GM12878 (cell line): ENCODE measurements at regions of chr7 and their contacts with region 1.

Region 1: GRCh38 chr7:105759670-105760550 is 116.5 kb downstream of the ATXN7L1 start:
- DNase-seq: no peak
- ATAC-seq: peak; percentile 60
- H3K4me3 ChIP-seq: no peak overlapping the region
- H3K27ac ChIP-seq: no peak overlapping the region
- H3K4me1 ChIP-seq: no peaks in the 10 kb centered on the region
- H3K27me3 ChIP-seq: peaks cover 0 to 3% of the 10 kb centered on the region in 2 experiments; a peak in 2 of 4 replicates
- CTCF ChIP-seq: peak; percentile 33 to 79 (median 42); a peak in 5 of 6 replicates
- EP300 ChIP-seq: no peak
- POLR2A ChIP-seq: no peak
- RAD21 ChIP-seq: peak; percentile 75

Region 2: DNA sequence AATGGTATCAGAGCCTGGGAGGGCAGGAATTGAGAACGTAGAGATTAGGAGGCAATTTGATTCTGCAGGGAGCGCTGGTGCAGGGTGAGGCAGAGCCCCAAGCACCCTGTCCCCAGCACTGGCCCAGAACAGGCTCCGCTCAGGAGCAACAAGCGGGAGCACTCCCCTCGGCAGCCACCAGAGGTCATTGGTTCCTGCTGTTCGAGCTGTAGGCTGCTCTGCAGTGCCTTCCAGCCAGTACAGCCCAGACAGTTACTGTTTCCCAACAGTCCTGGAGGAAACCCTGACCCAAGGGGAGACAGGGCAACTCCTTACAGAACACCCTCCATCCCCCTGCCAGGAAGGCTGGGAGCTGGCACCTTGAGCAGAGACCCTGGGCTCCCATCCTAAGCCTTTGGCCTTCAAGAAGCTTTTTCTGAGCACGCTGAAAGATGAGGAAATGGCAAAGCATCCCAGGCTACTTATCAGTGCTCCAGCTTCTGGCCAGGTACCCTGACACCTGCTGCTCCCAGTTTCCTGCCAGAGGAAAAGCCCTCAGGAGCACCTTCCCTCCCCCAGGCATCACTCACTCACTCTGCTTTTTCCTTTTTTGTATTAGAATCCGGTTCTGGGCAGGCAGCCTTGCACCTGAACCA is 107.4 kb before region 1 on chr7:
- CTCF ChIA-PET with region 1: interaction called, 15 read pairs
- POLR2A ChIA-PET with region 1: no interaction called
- RAD21 ChIA-PET with region 1: interaction called, 7 read pairs
- SMC1A ChIA-PET with region 1: interaction called, 8 read pairs
- in situ Hi-C with region 1: no loop called
- intact Hi-C with region 1: no loop called
- DNase-seq: no peak
- ATAC-seq: peak; percentile 98
- H3K4me3 ChIP-seq: no peak overlapping the region
- H3K27ac ChIP-seq: no peak overlapping the region
- H3K4me1 ChIP-seq: no peaks in the 10 kb centered on the region
- H3K27me3 ChIP-seq: no peaks in the 10 kb centered on the region; a peak in 2 of 4 replicates
- CTCF ChIP-seq: peak; percentile 83 to 93 (median 87)
- EP300 ChIP-seq: no peak
- POLR2A ChIP-seq: no peak
- RAD21 ChIP-seq: peak; percentile 70

Region 3: DNA sequence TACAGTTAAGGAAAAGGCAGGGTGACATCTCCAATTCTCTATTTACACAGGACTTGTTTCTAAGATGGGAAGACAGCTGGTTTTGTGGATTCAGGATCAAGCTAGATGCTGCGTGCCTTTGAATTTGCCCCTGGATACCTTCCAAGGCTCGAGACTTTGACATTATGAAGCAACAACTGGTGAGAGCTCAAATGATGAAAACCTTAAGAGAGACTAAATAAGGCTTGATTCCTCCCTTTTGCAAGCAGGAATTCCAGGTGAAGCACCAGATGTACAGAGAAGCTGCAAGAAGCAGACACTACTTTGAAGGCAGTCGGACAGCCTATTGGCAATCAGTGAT is 35.5 kb after region 1 on chr7:
- CTCF ChIA-PET with region 1: interaction called, 7 read pairs
- POLR2A ChIA-PET with region 1: no interaction called
- RAD21 ChIA-PET with region 1: no interaction called
- SMC1A ChIA-PET with region 1: interaction called, 11 read pairs
- in situ Hi-C with region 1: no loop called
- intact Hi-C with region 1: no loop called
- DNase-seq: no peak
- ATAC-seq: no peak
- H3K4me3 ChIP-seq: no peak overlapping the region
- H3K27ac ChIP-seq: no peak overlapping the region
- H3K4me1 ChIP-seq: peaks cover 3% of the 10 kb centered on the region; the same call in 1 of the 2 replicates
- H3K27me3 ChIP-seq: peaks cover 3% of the 10 kb centered on the region in 2 experiments; a peak in 1 of 4 replicates
- CTCF ChIP-seq: no peak
- EP300 ChIP-seq: no peak
- POLR2A ChIP-seq: no peak
- RAD21 ChIP-seq: no peak

Region 4: DNA sequence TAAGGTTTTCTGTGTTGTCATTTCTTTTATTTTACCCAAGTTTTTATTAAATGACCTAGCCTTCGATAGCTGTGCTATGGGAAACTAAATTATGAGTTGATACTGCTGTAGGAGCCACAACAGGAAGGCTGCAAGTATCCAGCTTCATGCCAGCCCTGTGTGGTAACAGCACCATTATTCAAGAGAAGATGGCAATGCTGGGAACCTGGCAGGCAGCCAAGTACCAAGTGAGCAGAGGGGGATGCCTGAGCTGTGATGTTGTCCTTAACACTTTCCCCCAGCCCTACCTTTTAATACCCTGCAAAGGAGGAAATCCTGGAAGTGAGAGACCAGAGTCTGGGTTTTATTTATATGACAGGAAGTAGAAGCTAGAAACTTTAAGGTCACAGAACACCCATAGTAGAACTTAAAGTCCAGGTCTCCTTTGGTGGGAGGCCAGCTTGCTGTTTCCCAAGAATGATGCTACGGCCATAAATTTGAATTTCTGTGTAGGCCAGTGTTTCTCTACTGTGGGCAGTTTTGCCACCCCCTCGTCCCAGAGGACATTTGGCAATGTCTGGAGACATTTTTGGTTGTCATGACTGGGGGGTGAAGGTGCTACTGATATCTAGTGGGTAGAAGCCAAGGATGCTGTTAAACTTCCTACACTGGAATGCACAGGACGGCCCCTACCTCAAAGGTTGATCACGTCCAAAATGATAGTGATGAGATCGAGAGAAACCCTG is 125.6 kb after region 1 on chr7:
- CTCF ChIA-PET with region 1: interaction called, 42 read pairs
- POLR2A ChIA-PET with region 1: no interaction called
- RAD21 ChIA-PET with region 1: interaction called, 6 read pairs
- SMC1A ChIA-PET with region 1: interaction called, 17 read pairs
- in situ Hi-C with region 1: no loop called
- intact Hi-C with region 1: no loop called
- DNase-seq: no peak
- ATAC-seq: no peak
- H3K4me3 ChIP-seq: no peak overlapping the region
- H3K27ac ChIP-seq: no peak overlapping the region
- H3K4me1 ChIP-seq: no peaks in the 10 kb centered on the region
- H3K27me3 ChIP-seq: peaks cover 0 to 3% of the 10 kb centered on the region in 2 experiments; a peak in 2 of 4 replicates
- CTCF ChIP-seq: no peak
- EP300 ChIP-seq: no peak
- POLR2A ChIP-seq: no peak
- RAD21 ChIP-seq: no peak

Region 5: GRCh38 chr7:106022193-106022821 is 262.4 kb after region 1 on chr7:
- CTCF ChIA-PET with region 1: interaction called, 12 read pairs
- POLR2A ChIA-PET with region 1: no interaction called
- RAD21 ChIA-PET with region 1: interaction called, 3 read pairs
- SMC1A ChIA-PET with region 1: interaction called, 21 read pairs
- in situ Hi-C with region 1: loop called (anchors 10 kb)
- intact Hi-C with region 1: loop called (anchors 5 kb)
- DNase-seq: peak; percentile 74
- ATAC-seq: peak; percentile 72
- H3K4me3 ChIP-seq: no peak overlapping the region
- H3K27ac ChIP-seq: no peak overlapping the region
- H3K4me1 ChIP-seq: peaks cover 25% of the 10 kb centered on the region
- H3K27me3 ChIP-seq: no peaks in the 10 kb centered on the region; a peak in 1 of 4 replicates
- CTCF ChIP-seq: no peak
- EP300 ChIP-seq: no peak
- POLR2A ChIP-seq: no peak
- RAD21 ChIP-seq: no peak

Region 6: DNA sequence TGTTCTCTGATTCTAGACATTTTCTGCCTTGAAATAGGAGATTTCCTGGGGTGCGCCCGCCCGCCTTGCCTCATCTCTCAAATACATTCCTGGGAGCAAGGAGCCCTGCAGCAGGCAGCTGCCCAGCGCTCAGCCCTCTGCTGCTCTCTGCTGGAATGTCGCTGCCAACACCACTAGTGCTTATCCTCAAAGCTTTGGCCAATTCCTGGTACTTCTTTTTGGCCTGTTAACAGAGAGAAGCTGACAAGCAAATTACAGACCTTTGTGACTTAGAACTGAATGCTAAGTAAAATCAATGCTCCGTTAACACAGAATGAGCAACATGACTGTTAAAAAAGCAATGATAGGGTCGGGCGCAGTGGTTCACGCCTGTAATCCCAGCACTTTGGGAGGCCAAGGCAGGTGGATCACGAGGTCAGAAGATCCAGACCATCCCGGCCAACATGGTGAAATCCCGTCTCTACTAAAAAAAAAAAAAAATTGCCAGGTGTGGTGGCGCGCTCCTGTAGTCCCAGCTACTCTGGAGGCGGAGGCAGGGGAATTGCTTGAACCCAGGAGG is 394.1 kb after region 1 on chr7:
- CTCF ChIA-PET with region 1: interaction called, 20 read pairs
- POLR2A ChIA-PET with region 1: no interaction called
- RAD21 ChIA-PET with region 1: interaction called, 6 read pairs
- SMC1A ChIA-PET with region 1: interaction called, 11 read pairs
- in situ Hi-C with region 1: no loop called
- intact Hi-C with region 1: loop called (anchors 5 kb)
- DNase-seq: peak; percentile 45
- ATAC-seq: peak; percentile 94
- H3K4me3 ChIP-seq: no peak overlapping the region
- H3K27ac ChIP-seq: no peak overlapping the region
- H3K4me1 ChIP-seq: peaks cover 26% of the 10 kb centered on the region
- H3K27me3 ChIP-seq: no peaks in the 10 kb centered on the region
- CTCF ChIP-seq: peak; percentile 94 to 97 (median 96)
- EP300 ChIP-seq: no peak
- POLR2A ChIP-seq: no peak
- RAD21 ChIP-seq: peak; percentile 99